ENCODE measurements at regions of chr17 and their contacts with region 1.

Region 1: DNA sequence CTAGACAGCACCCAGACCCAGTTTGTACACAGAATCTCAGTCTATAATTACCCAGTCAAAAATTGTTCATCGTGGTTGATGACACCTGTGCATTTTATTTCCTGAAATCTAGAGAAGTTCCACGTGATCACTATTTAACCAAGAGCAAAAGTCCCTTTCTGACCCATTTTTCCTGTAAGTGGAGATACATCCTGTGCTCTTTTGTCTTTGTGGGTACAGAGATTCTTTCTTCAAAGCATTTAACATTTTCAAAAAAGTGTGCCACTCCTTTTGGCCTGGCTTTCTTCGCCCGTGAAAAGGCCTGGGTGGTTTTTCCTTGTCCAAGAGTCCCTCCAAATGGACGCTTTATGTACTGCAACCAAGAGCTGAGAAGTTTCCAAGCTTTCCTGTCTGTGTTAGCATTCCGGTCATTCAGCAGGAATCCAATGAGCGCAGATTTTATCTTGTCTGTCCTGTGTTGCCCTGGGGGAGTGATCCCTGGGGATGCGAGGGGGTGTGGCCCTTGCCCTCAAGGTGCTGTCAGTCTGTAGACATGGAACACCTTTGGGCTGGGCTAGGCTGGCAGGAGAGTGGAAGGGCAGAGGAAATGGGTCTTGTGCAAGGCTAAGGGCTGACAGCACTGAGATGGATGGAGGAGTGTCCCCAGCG is 161.1 kb upstream of the CACNG5 start:
- DNase-seq: peak in 2 of 4 experiments; percentile 19 to 23
- ATAC-seq: peak; percentile 65; the same call in 2 of the 3 replicates
- H3K4me3 ChIP-seq: no peak overlapping the region
- H3K27ac ChIP-seq: no peak overlapping the region
- H3K4me1 ChIP-seq: no peaks in the 10 kb centered on the region; a peak in 1 of 5 replicates
- H3K27me3 ChIP-seq: no peaks in the 10 kb centered on the region
- CTCF ChIP-seq: peak; percentile 53 to 66 (median 65)
- EP300 ChIP-seq: no peak
- POLR2A ChIP-seq: no peak
- RAD21 ChIP-seq: peak; percentile 8 to 60; a peak in 2 of 4 replicates

Region 2: DNA sequence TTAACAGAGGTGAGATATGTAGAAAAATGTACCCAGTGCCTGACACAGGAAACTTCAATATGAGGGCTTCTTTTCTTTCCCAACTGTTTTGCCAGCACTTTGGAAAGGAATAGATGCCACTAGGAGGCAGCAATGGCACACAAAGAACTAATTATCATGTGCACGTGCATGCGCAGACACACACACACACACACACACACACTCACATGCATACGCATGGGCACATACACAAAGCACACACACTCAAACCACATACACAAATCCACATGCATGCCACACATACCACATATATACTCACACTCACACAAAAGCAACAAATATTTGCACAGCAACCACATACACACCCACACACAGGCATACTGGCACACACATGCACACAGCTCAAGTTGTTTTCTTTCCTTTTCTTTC is 473.1 kb before region 1 on chr17:
- CTCF ChIA-PET with region 1: no interaction called
- POLR2A ChIA-PET with region 1: no interaction called
- in situ Hi-C with region 1: no loop called
- intact Hi-C with region 1: loop called (anchors 2 kb)
- DNase-seq: peak; percentile 17 to 65 (median 30)
- ATAC-seq: peak; percentile 79
- H3K4me3 ChIP-seq: no peak overlapping the region
- H3K27ac ChIP-seq: no peak overlapping the region
- H3K4me1 ChIP-seq: no peaks in the 10 kb centered on the region
- H3K27me3 ChIP-seq: peaks cover 11 to 33% of the 10 kb centered on the region in 2 experiments; a peak in 4 of 5 replicates
- CTCF ChIP-seq: peak; percentile 60 to 78 (median 63); a peak in 5 of 6 replicates
- EP300 ChIP-seq: no peak
- POLR2A ChIP-seq: no peak
- RAD21 ChIP-seq: peak; percentile 61 to 84

Region 3: DNA sequence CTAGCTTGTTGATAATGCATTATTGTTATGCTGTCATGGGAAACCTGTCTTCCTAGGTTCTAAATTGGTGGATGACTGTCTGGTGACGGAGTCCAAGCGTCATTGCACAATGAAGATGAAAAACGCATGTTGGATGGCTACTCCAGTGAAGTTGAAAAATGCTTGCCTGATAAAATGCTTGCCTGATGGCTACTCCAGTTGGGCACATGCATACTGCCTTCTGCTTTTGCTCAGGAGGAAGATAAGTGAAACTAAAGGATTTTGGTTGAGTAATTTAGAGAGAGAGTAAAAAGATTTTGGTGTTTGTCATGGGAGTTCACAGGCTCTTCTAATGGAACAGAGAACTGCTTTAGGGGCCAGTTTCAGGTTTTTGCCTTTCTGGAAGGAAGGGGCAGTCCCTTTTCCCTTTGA is 252.8 kb before region 1 on chr17:
- CTCF ChIA-PET with region 1: no interaction called
- POLR2A ChIA-PET with region 1: no interaction called
- in situ Hi-C with region 1: no loop called
- intact Hi-C with region 1: no loop called
- DNase-seq: no peak
- ATAC-seq: no peak
- H3K4me3 ChIP-seq: no peak overlapping the region
- H3K27ac ChIP-seq: no peak overlapping the region
- H3K4me1 ChIP-seq: no peaks in the 10 kb centered on the region; a peak in 3 of 5 replicates
- H3K27me3 ChIP-seq: no peaks in the 10 kb centered on the region
- CTCF ChIP-seq: no peak
- EP300 ChIP-seq: no peak
- POLR2A ChIP-seq: no peak
- RAD21 ChIP-seq: no peak

Region 4: DNA sequence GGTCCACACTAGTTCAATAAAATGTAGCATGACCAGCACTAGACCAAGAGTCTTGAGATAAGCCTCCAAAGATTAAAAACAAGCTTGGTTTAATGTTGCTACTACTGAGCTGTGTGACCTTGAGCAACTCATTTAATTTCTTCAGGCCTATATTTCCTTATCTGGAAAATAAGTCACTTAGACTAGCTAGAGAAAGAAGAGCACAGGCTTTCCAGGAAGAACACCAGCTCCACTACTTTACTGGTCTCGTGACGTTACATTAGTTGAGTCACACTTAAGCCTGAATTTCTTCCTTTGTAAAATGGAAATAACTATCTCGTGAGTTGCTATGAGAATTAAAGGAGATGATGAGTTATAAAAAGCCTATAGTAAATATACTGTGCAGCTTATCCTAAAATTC is 565.8 kb after region 1 on chr17:
- CTCF ChIA-PET with region 1: no interaction called
- POLR2A ChIA-PET with region 1: no interaction called
- in situ Hi-C with region 1: no loop called
- intact Hi-C with region 1: no loop called
- DNase-seq: peak in 1 of 4 experiments; percentile 58
- ATAC-seq: peak; percentile 12
- H3K4me3 ChIP-seq: no peak overlapping the region
- H3K27ac ChIP-seq: peak overlapping the region; percentile 50
- H3K4me1 ChIP-seq: peaks cover 3 to 30% of the 10 kb centered on the region in 2 experiments; a peak in 4 of 5 replicates
- H3K27me3 ChIP-seq: no peaks in the 10 kb centered on the region
- CTCF ChIP-seq: no peak
- EP300 ChIP-seq: no peak
- POLR2A ChIP-seq: no peak
- RAD21 ChIP-seq: no peak